Right ventricle myocardium inferior (tissue), 1 donor: ENCODE measurements at regions of chr9 and their contacts with region 1.

Region 1: GRCh38 chr9:81665322-81665871 is 23.9 kb downstream of the TLE1 start:
- DNase-seq: no peak
- ATAC-seq: peak; percentile 68

Region 2: GRCh38 chr9:81619348-81620001 is 45.9 kb before region 1 on chr9:
- intact Hi-C with region 1: loop called (anchors 5 kb)
- DNase-seq: no peak
- ATAC-seq: no peak